IMR-90 (cell line): ENCODE measurements at regions of chr5 and their contacts with region 1.

Region 1: DNA sequence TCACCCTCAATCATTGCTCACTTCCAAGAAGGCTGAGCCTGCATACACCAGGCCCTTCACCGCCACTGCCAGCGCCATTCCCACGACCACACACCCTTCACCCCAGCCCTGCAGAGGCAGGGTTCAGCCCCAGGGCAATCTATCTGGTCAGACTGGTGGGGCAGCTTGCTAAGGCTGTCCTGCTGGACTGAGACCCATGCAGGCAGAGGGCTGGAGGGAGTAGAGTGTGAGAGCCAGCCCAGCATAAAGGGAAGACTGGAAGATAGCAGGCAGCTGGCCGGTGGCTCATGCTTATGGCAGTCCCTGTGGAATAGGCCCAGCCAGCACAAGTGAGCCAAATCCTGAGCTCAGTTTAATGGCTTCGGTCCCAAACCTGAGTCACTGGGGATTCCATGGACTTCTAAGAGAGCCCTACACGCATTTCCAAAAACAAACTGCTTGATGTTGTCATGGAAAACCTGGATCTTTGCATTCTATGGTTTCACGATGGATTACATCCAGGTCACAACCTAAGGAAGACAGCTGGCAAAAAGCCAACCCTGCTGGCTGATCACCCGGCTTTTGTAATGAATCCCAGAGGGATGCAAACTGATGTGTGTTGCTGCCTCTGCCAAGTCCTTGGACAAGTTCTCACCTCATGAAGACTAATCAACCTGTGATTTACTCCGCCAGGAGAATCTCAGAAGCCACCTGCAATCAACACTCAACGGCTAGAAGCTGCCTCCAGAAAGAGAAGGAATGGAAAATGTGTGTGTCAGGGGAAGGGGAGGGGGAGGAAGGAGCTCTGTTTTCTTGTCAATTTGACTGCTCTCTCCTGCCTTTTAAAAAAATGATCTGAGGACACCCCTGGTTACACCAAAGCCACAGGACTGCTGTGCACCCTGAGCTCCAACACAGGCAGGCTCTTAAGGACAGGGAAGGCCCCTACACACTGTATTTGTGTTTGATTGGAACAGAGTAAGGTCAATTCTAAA is 143.6 kb downstream of the LHFPL2 start:
- DNase-seq: peak; percentile 100
- ATAC-seq: peak; percentile 86
- H3K4me3 ChIP-seq: no peak overlapping the region
- H3K27ac ChIP-seq: peak overlapping the region; percentile 66
- H3K4me1 ChIP-seq: peaks cover 49% of the 10 kb centered on the region
- H3K27me3 ChIP-seq: no peaks in the 10 kb centered on the region
- CTCF ChIP-seq: no peak
- POLR2A ChIP-seq: peak; percentile 71; the same call in 1 of the 2 replicates
- RAD21 ChIP-seq: peak; percentile 32

Region 2: DNA sequence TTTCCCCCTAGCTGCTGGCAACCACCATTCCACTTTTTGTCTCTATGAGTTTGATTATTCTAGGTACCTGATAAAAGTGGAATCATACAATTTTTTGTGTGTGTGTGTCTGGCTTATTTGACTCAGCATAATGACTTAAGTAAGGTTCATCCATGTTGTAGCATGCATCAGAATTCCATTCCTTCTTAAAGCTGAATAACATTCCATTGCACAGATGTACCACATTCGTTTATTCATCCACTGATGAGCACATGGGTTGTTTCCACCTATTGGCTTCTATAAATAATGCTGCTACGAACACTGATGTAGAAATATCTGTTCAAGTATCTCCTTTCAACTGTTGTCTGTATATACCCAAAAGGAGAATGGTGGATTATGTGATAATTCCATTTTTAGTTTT is 244.2 kb before region 1 on chr5:
- CTCF ChIA-PET with region 1: no interaction called
- POLR2A ChIA-PET with region 1: no interaction called
- dilution Hi-C with region 1: no loop called
- in situ Hi-C with region 1: no loop called
- intact Hi-C with region 1: no loop called
- DNase-seq: peak; percentile 73
- ATAC-seq: peak; percentile 57
- H3K4me3 ChIP-seq: no peak overlapping the region
- H3K27ac ChIP-seq: no peak overlapping the region
- H3K4me1 ChIP-seq: no peaks in the 10 kb centered on the region
- H3K27me3 ChIP-seq: no peaks in the 10 kb centered on the region
- CTCF ChIP-seq: no peak
- POLR2A ChIP-seq: no peak
- RAD21 ChIP-seq: no peak

Region 3: DNA sequence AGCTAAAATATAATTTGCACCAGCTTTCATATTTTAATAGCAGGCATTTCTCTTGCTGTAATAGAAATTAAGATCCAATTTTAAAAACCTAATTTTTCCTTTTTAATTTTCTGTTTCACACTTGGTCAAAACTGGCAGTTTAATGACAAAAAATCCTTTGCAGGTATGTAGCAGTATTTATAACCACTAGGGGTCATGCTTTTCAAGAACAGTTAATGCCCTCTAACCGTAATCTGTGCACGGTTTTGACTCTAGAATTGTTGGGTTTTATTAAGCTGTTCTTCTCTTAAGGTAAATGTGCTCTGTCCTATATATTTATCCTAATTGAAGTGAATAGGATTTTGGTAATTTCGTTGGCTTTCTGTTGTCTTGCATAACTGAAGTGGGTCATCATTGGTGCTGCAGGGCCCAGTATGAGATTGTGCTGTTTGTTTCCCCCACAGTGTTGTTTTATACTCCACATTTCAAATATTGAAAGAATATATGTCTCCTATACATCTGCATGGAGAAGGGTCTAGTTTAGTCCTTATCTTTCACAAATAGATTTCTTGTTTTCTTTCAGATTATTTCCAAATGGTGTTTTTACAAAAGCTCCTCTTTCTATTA is 37.1 kb before region 1 on chr5:
- CTCF ChIA-PET with region 1: interaction called, 5 read pairs
- POLR2A ChIA-PET with region 1: no interaction called
- dilution Hi-C with region 1: no loop called
- in situ Hi-C with region 1: no loop called
- intact Hi-C with region 1: loop called (anchors 5 kb)
- DNase-seq: peak; percentile 74
- ATAC-seq: peak; percentile 86
- H3K4me3 ChIP-seq: no peak overlapping the region
- H3K27ac ChIP-seq: no peak overlapping the region
- H3K4me1 ChIP-seq: no peaks in the 10 kb centered on the region
- H3K27me3 ChIP-seq: no peaks in the 10 kb centered on the region
- CTCF ChIP-seq: peak; percentile 75
- POLR2A ChIP-seq: no peak
- RAD21 ChIP-seq: peak; percentile 79

Region 4: GRCh38 chr5:78483809-78484521 is 21.0 kb before region 1 on chr5:
- CTCF ChIA-PET with region 1: no interaction called
- POLR2A ChIA-PET with region 1: no interaction called
- dilution Hi-C with region 1: no loop called
- in situ Hi-C with region 1: no loop called
- intact Hi-C with region 1: loop called (anchors 2 kb)
- DNase-seq: peak; percentile 77
- ATAC-seq: peak; percentile 85
- H3K4me3 ChIP-seq: no peak overlapping the region
- H3K27ac ChIP-seq: no peak overlapping the region
- H3K4me1 ChIP-seq: peaks cover 2% of the 10 kb centered on the region
- H3K27me3 ChIP-seq: no peaks in the 10 kb centered on the region
- CTCF ChIP-seq: no peak
- POLR2A ChIP-seq: no peak
- RAD21 ChIP-seq: no peak